ENCODE measurements at regions of chr10 and their contacts with region 1.

Region 1: DNA sequence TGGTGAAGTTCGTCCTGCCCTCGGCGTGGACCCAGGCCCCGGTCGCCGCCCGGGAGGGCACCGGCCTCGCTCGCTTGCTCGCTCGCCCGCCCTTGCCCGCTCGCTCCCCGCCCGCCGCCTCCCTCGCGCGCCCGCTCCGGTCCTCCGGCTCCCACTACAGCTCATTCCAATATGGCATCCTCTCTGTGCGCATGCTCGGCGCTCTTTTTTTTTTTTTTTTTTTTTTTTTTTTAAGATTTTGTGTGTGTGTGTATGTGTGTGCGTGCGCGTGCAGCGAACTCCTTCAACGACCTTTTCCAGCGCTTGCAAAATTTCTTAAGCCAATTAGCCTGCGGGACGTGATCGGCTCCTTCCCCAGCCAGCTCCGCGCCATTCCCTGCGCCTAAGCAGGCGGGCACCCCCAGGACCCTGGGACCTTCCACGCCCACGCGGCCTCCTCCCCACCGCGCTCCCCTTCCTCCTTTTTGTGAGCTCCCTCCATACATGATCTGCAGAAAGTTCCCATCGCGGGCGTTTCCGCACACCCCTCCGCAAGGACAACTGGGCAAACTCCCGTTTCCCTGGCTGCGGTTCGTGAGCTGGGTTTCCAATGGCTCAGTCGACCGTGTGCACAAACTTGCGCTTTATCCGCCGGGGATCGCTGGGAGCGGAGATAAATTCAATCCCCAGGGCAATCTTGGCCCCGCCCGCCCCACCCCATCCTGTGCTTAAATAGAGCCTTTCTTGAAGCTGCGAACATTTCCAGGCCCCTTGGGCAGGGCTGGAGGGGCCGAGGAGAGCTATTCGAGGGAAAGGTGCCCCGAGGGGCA is at the start of gene SFMBT2:
- DNase-seq: peak; percentile 45 to 71 (median 64)
- ATAC-seq: peak; percentile 61
- H3K4me3 ChIP-seq: peak within 1 kb of the TSS; percentile 92
- H3K4me3 Mint-ChIP-seq: peak within 1 kb of the TSS; percentile 93 to 100 (median 99)
- H3K27ac ChIP-seq: peak within 1 kb of the TSS; percentile 76
- H3K27ac Mint-ChIP-seq: peak within 1 kb of the TSS; percentile 93 to 99 (median 95)
- H3K4me1 ChIP-seq: peaks cover 18 to 28% of the 10 kb centered on the region in 2 donors
- H3K4me1 Mint-ChIP-seq: peaks cover 14 to 49% (median 37%) of the 10 kb centered on the region in 7 donors
- H3K27me3 ChIP-seq: no peaks in the 10 kb centered on the region
- H3K27me3 Mint-ChIP-seq: peaks cover 0 to 34% (median 0%) of the 10 kb centered on the region in 5 donors
- total RNA-seq, gene SFMBT2: 38.6 to 50.9 (median 40.9) TPM

Region 2: DNA sequence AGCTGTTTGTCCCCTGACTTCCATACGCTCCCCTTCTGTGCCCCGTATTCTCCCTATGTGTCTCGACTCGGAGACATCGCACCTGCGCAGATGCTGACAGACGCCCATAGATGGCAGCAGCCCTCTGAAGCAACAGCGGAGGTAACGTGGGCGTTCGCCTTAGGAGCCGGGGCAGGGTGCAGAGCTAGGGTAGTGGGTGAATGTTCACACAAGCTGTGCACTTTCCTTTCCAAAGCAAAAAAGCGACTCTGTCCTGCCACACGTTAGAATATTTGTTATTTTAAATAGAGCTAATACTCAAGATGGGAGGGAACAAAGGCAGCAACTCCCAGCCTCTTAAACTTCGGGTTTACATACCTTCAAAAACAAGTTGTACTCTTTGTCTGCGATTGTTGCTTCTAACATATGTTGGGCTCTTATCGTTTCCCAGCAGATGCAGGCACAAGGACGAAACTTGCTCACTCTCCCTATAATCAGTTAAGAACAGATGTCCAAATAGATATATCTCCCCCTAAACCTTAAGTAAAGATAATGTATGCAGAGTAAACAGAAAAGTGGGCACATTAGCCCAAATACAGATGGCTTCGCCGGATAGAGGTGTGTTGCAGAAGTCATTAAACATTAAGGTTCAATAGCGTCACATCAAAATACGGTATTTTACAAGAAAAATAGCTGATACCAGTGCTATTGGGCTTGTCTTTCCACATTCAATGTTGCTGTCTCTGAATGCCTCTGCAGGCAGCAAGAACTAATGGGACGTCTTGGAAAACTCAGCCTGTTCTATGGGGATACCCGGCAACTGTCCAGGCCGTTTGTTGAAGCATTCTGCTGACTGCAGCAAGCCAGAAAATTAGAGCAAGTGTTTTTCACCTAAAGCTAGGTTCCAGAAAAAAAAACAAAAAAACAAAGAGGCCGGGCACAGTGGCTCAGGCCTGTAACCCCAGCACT is 490.7 kb before region 1 on chr10:
- CTCF ChIA-PET with region 1: interaction called, 77 read pairs
- POLR2A ChIA-PET with region 1: interaction called, 3 read pairs
- intact Hi-C with region 1: loop called (anchors 1 kb)
- DNase-seq: peak; percentile 47 to 74 (median 69)
- ATAC-seq: peak; percentile 97
- H3K4me3 ChIP-seq: no peak overlapping the region
- H3K4me3 Mint-ChIP-seq: peak overlapping the region in 7 of 10 donors; percentile 13 to 45 (median 26)
- H3K27ac ChIP-seq: no peak overlapping the region
- H3K27ac Mint-ChIP-seq: no peak overlapping the region
- H3K4me1 ChIP-seq: peaks cover 0 to 21% of the 10 kb centered on the region in 2 donors
- H3K4me1 Mint-ChIP-seq: peaks cover 0 to 25% (median 12%) of the 10 kb centered on the region in 7 donors
- H3K27me3 ChIP-seq: no peaks in the 10 kb centered on the region
- H3K27me3 Mint-ChIP-seq: peaks cover 0 to 14% (median 5%) of the 10 kb centered on the region in 5 donors

Region 3: DNA sequence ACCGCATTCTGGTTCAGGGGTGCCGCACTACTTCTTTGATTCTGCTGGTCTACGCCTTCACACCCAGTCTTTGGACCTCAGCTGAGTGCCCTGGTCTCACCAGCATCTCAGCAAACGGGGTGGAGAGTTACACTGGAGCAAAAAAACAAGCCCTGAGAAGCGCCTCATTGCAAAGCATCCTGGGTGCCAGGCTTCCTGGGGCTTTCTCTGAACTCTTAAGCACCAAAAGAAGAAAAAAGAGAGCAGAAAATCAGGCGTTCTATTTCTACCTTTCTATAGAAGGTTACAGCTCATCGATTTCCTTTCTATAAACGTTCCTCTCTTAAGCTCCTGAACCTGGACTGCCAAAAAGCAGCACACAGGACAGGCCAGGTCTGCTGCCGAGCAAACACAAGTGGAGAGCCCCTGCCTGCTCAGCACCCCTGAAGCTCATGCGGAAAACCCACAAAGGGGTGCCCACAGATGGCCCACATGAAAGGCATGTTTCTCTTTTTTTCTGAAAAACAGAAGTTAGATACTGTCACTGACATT is 218.2 kb before region 1 on chr10:
- CTCF ChIA-PET with region 1: interaction called, 3 read pairs
- POLR2A ChIA-PET with region 1: interaction called, 4 read pairs
- intact Hi-C with region 1: loop called (anchors 1 to 2 kb)
- DNase-seq: peak; percentile 30 to 85 (median 80)
- ATAC-seq: peak; percentile 95
- H3K4me3 ChIP-seq: peak overlapping the region; percentile 29
- H3K4me3 Mint-ChIP-seq: peak overlapping the region; percentile 67 to 89 (median 87)
- H3K27ac ChIP-seq: peak overlapping the region; percentile 66
- H3K27ac Mint-ChIP-seq: peak overlapping the region; percentile 93 to 98 (median 97)
- H3K4me1 ChIP-seq: peaks cover 24 to 80% of the 10 kb centered on the region in 2 donors
- H3K4me1 Mint-ChIP-seq: peaks cover 46 to 88% (median 75%) of the 10 kb centered on the region in 7 donors
- H3K27me3 ChIP-seq: no peaks in the 10 kb centered on the region
- H3K27me3 Mint-ChIP-seq: no peaks in the 10 kb centered on the region

Region 4: GRCh38 chr10:7318836-7319235 is 92.2 kb before region 1 on chr10:
- CTCF ChIA-PET with region 1: no interaction called
- POLR2A ChIA-PET with region 1: no interaction called
- intact Hi-C with region 1: loop called in 1 of 2 experiments (anchors 5 kb)
- DNase-seq: peak in 3 of 9 donors; percentile 10 to 29 (median 14)
- ATAC-seq: no peak
- H3K4me3 ChIP-seq: no peak overlapping the region
- H3K4me3 Mint-ChIP-seq: peak overlapping the region in 9 of 10 donors; percentile 43 to 84 (median 67)
- H3K27ac ChIP-seq: no peak overlapping the region
- H3K27ac Mint-ChIP-seq: peak overlapping the region in 8 of 9 donors; percentile 27 to 90 (median 74)
- H3K4me1 ChIP-seq: peaks cover 23 to 33% of the 10 kb centered on the region in 2 donors
- H3K4me1 Mint-ChIP-seq: peaks cover 45 to 84% (median 75%) of the 10 kb centered on the region in 7 donors
- H3K27me3 ChIP-seq: no peaks in the 10 kb centered on the region
- H3K27me3 Mint-ChIP-seq: no peaks in the 10 kb centered on the region

Region 5: GRCh38 chr10:7507887-7508726 is 97.0 kb after region 1 on chr10:
- CTCF ChIA-PET with region 1: no interaction called
- POLR2A ChIA-PET with region 1: no interaction called
- intact Hi-C with region 1: loop called in 1 of 2 experiments (anchors 5 kb)
- DNase-seq: peak in 7 of 9 donors; percentile 26 to 66 (median 51)
- ATAC-seq: peak; percentile 52
- H3K4me3 ChIP-seq: no peak overlapping the region
- H3K4me3 Mint-ChIP-seq: peak overlapping the region; percentile 7 to 90 (median 66)
- H3K27ac ChIP-seq: peak overlapping the region; percentile 64
- H3K27ac Mint-ChIP-seq: peak overlapping the region; percentile 84 to 97 (median 95)
- H3K4me1 ChIP-seq: peaks cover 24 to 34% of the 10 kb centered on the region in 2 donors
- H3K4me1 Mint-ChIP-seq: peaks cover 44 to 74% (median 60%) of the 10 kb centered on the region in 7 donors
- H3K27me3 ChIP-seq: no peaks in the 10 kb centered on the region
- H3K27me3 Mint-ChIP-seq: no peaks in the 10 kb centered on the region

Region 6: GRCh38 chr10:8053446-8054290 is 642.6 kb after region 1 on chr10:
- CTCF ChIA-PET with region 1: no interaction called
- POLR2A ChIA-PET with region 1: no interaction called
- intact Hi-C with region 1: loop called (anchors 5 to 10 kb)
- DNase-seq: peak; percentile 73 to 97 (median 89)
- ATAC-seq: peak; percentile 77
- H3K4me3 ChIP-seq: peak overlapping the region; percentile 87
- H3K4me3 Mint-ChIP-seq: peak overlapping the region; percentile 87 to 97 (median 94)
- H3K27ac ChIP-seq: peak overlapping the region; percentile 82
- H3K27ac Mint-ChIP-seq: peak overlapping the region; percentile 88 to 99 (median 95)
- H3K4me1 ChIP-seq: peaks cover 26 to 42% of the 10 kb centered on the region in 2 donors
- H3K4me1 Mint-ChIP-seq: peaks cover 14 to 45% (median 37%) of the 10 kb centered on the region in 7 donors
- H3K27me3 ChIP-seq: peaks cover 19 to 32% of the 10 kb centered on the region in 2 donors
- H3K27me3 Mint-ChIP-seq: peaks cover 20 to 30% (median 22%) of the 10 kb centered on the region in 5 donors